ENCODE measurements at regions of chr4 and their contacts with region 1.

Region 1: GRCh38 chr4:2354118-2354517 is 64.3 kb downstream of the ZFYVE28 start:
- DNase-seq: peak in 26 of 35 experiments; percentile 8 to 63 (median 32)
- ATAC-seq: peak in 3 of 4 experiments; percentile 54 to 82 (median 58)
- H3K4me3 ChIP-seq: no peak overlapping the region
- H3K4me3 Mint-ChIP-seq: no peak overlapping the region
- H3K27ac ChIP-seq: no peak overlapping the region
- H3K27ac Mint-ChIP-seq: no peak overlapping the region
- H3K4me1 ChIP-seq: peaks cover 0 to 19% of the 10 kb centered on the region in 2 experiments
- H3K4me1 Mint-ChIP-seq: peaks cover 8 to 16% (median 10%) of the 10 kb centered on the region in 3 donors
- H3K27me3 ChIP-seq: no peaks in the 10 kb centered on the region
- H3K27me3 Mint-ChIP-seq: no peaks in the 10 kb centered on the region

Region 2: DNA sequence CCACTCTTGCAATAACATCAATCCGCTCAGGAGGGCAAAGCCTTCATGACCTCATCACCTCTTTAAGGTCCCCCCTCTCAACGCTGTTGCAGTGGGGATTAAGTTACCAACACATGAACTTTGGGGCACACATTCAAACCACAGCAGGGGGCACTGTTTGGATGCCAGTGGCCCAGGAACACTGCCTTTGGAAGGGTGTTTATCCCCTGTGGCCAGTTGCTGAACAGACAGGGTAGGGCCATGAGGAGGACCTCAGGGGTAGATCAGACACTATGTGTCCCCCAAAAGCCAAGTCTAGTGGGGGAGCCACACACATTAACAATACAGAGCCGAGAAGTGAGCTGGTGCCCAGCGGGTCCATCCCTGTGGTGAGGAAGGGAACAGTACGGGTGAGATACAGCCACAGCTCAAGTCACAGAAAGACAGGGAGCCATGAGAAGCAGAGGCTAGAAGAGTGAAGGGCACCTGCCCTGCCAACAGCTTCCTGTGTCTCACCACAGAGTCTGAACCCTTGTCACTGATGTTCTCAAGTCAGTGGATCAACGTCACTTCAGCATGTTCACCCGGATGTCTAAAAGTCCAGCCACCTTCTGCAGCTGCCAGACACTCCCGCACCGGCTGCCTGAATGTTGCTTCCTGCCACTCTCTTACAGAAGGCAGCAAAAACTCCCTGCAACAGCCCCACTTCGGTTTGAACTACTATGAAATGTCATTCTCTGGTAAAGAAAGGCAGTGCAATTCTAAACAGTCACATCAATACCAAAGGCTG is 72.4 kb before region 1 on chr4:
- CTCF ChIA-PET with region 1: interaction called in 1 of 2 experiments, 13 read pairs
- POLR2A ChIA-PET with region 1: interaction called in 1 of 2 experiments, 4 read pairs
- DNase-seq: peak; percentile 59 to 97 (median 90)
- ATAC-seq: peak; percentile 93 to 97 (median 96)
- H3K4me3 ChIP-seq: peak overlapping the region in 1 of 2 donors; percentile 18
- H3K4me3 Mint-ChIP-seq: peak overlapping the region; percentile 52 to 82 (median 65)
- H3K27ac ChIP-seq: peak overlapping the region; percentile 96
- H3K27ac Mint-ChIP-seq: peak overlapping the region; percentile 98 to 99
- H3K4me1 ChIP-seq: peaks cover 20 to 63% of the 10 kb centered on the region in 2 experiments
- H3K4me1 Mint-ChIP-seq: peaks cover 34 to 56% (median 49%) of the 10 kb centered on the region in 3 donors
- H3K27me3 ChIP-seq: no peaks in the 10 kb centered on the region
- H3K27me3 Mint-ChIP-seq: no peaks in the 10 kb centered on the region

Region 3: GRCh38 chr4:2341261-2341841 is 12.8 kb before region 1 on chr4:
- CTCF ChIA-PET with region 1: no interaction called
- POLR2A ChIA-PET with region 1: no interaction called
- DNase-seq: peak in 2 of 35 experiments; percentile 3 to 22
- ATAC-seq: no peak
- H3K4me3 ChIP-seq: no peak overlapping the region
- H3K4me3 Mint-ChIP-seq: no peak overlapping the region
- H3K27ac ChIP-seq: no peak overlapping the region
- H3K27ac Mint-ChIP-seq: no peak overlapping the region
- H3K4me1 ChIP-seq: no peaks in the 10 kb centered on the region
- H3K4me1 Mint-ChIP-seq: peaks cover 0 to 2% (median 0%) of the 10 kb centered on the region in 3 donors
- H3K27me3 ChIP-seq: no peaks in the 10 kb centered on the region
- H3K27me3 Mint-ChIP-seq: no peaks in the 10 kb centered on the region

Measured in T-cell (primary cell).